Left ventricle myocardium inferior (tissue), 1 donor: ENCODE measurements at regions of chr9 and their contacts with region 1.

Region 1: GRCh38 chr9:7433508-7434292 is 365.9 kb downstream of the DMAC1 start:
- DNase-seq: no peak
- H3K4me3 ChIP-seq: no peak overlapping the region
- H3K27ac ChIP-seq: no peak overlapping the region
- H3K4me1 ChIP-seq: no peaks in the 10 kb centered on the region
- H3K27me3 ChIP-seq: no peaks in the 10 kb centered on the region
- CTCF ChIP-seq: no peak

Region 2: GRCh38 chr9:6413365-6414246 is 1020.1 kb before region 1 on chr9:
- intact Hi-C with region 1: no loop called
- DNase-seq: no peak
- H3K4me3 ChIP-seq: peak overlapping the region; percentile 86
- H3K27ac ChIP-seq: peak overlapping the region; percentile 93
- H3K4me1 ChIP-seq: peaks cover 52% of the 10 kb centered on the region
- H3K27me3 ChIP-seq: no peaks in the 10 kb centered on the region
- CTCF ChIP-seq: no peak

Region 3: GRCh38 chr9:7368410-7369292 is 65.0 kb before region 1 on chr9:
- intact Hi-C with region 1: no loop called
- DNase-seq: no peak
- H3K4me3 ChIP-seq: no peak overlapping the region
- H3K27ac ChIP-seq: peak overlapping the region; percentile 80
- H3K4me1 ChIP-seq: peaks cover 50% of the 10 kb centered on the region
- H3K27me3 ChIP-seq: no peaks in the 10 kb centered on the region
- CTCF ChIP-seq: no peak

Region 4: GRCh38 chr9:7479300-7479699 is 45.6 kb after region 1 on chr9:
- intact Hi-C with region 1: loop called (anchors 5 kb)
- DNase-seq: no peak
- H3K4me3 ChIP-seq: no peak overlapping the region
- H3K27ac ChIP-seq: no peak overlapping the region
- H3K4me1 ChIP-seq: no peaks in the 10 kb centered on the region
- H3K27me3 ChIP-seq: no peaks in the 10 kb centered on the region
- CTCF ChIP-seq: no peak

Region 5: GRCh38 chr9:7691909-7692308 is 258.2 kb after region 1 on chr9:
- intact Hi-C with region 1: no loop called
- DNase-seq: no peak
- H3K4me3 ChIP-seq: no peak overlapping the region
- H3K27ac ChIP-seq: no peak overlapping the region
- H3K4me1 ChIP-seq: no peaks in the 10 kb centered on the region
- H3K27me3 ChIP-seq: no peaks in the 10 kb centered on the region
- CTCF ChIP-seq: no peak

Region 6: DNA sequence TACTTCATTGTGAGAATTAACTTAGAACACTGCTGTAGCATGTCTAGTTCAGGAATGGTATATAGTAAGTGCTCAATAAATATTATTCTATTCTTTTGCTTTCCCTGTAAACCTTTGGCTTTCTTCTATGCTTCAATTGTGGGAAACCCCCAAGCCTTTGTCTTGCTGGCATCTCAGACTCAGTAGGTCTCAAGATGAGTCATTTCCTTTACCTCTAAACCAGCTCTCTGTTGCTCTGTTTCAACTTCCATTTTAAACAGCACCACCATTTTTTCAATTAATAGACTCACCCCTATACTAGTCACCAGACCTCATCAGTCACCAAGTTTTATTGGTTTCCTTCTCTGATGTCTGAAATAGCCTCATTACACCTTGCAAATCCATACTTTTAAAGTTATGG is 322.4 kb after region 1 on chr9:
- intact Hi-C with region 1: no loop called
- DNase-seq: no peak
- H3K4me3 ChIP-seq: no peak overlapping the region
- H3K27ac ChIP-seq: no peak overlapping the region
- H3K4me1 ChIP-seq: no peaks in the 10 kb centered on the region
- H3K27me3 ChIP-seq: no peaks in the 10 kb centered on the region
- CTCF ChIP-seq: no peak